ENCODE measurements at regions of chr9 and their contacts with region 1.

Region 1: DNA sequence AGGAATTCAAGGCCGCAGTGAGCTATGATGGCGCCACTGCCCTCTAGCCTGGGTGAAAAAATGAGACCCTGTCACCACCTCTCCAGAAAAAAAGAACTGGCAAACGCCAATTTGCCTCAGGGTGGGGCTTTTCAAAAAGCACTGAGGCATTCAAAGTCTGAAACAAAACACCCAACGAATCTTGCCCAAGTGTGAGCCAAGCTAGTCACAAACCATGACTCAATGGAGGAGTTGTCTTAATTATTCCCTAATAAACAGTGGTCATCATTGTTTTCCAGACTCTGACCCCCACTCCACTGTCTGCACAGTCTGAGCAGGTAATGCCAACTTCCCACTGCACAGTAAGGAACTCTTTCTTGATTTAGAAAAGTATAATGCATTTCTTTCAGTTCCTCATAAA is 16.8 kb downstream of the FRMD3 start:
- DNase-seq: no peak
- ATAC-seq: no peak

Region 2: DNA sequence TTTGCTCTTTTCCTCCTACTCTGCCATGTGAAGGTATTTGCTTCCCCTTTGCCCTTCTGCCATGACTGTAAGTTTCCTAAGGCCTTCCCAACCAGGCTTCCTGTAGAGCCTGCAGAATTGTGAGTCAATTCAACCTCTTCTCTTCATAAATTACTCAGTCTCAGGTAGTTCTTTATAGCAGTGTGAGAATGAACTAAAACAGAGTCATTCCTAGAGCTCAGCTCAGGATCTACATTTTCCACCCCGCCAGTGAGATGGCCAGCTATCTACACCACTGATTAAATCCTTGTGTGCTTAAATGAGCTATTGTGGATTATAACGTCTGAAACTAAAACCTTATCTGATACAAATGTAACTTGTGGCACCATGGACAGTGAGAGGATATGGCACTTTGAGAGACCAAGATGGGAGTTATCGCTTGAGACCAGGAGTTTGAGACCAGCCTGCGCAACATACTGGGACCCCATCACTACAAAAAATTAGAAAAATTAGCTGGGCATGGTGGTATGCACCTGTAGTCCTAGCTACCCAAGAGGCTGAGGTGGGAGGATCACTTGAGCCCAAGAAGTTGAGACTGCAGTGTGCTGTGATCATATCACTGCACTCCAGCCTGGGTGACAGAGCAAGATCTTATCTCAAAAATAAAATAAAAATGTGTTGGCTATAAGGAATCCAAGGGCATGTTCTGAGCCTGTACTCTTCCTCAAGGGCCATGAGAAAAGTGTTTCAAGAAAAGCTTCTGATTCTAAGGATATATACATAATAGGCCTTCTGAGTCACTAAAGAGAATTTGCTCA is 38.0 kb before region 1 on chr9:
- intact Hi-C with region 1: loop called (anchors 5 kb)
- DNase-seq: no peak
- ATAC-seq: no peak